PC-9 (cell line): ENCODE measurements at regions of chr9 and their contacts with region 1.

Region 1: GRCh38 chr9:113892861-113893491 is 16.9 kb downstream of the ZNF618 start:
- DNase-seq: no peak
- H3K4me3 ChIP-seq: no peak overlapping the region
- H3K27ac ChIP-seq: no peak overlapping the region
- H3K4me1 ChIP-seq: no peaks in the 10 kb centered on the region
- H3K27me3 ChIP-seq: peaks cover 34% of the 10 kb centered on the region
- CTCF ChIP-seq: no peak

Region 2: DNA sequence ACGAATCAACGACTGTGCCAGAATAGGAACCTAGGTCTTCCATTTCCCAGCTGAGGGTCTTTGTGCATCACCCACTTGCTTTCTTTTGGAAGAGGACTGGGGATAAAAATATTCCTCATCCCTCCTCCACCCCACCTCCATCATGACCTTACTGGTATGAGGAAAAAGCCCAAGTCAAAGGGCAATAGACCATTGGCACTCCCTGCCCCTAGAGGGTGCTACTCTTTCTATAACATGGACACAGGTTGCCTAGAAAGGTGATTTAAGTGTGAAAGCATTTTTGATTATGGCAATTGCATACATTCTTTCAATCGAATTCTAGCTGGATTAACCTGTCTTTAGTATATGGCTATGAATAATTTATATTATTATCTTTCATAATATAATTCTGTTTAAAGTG is 39.7 kb before region 1 on chr9:
- CTCF ChIA-PET with region 1: no interaction called
- POLR2A ChIA-PET with region 1: no interaction called
- intact Hi-C with region 1: loop called (anchors 5 kb)
- DNase-seq: no peak
- H3K4me3 ChIP-seq: no peak overlapping the region
- H3K27ac ChIP-seq: no peak overlapping the region
- H3K4me1 ChIP-seq: no peaks in the 10 kb centered on the region
- H3K27me3 ChIP-seq: peaks cover 32% of the 10 kb centered on the region
- CTCF ChIP-seq: peak; percentile 42; the same call in 1 of the 2 replicates